HEK293 (cell line): ENCODE measurements at regions of chr20 and their contacts with region 1.

Region 1: DNA sequence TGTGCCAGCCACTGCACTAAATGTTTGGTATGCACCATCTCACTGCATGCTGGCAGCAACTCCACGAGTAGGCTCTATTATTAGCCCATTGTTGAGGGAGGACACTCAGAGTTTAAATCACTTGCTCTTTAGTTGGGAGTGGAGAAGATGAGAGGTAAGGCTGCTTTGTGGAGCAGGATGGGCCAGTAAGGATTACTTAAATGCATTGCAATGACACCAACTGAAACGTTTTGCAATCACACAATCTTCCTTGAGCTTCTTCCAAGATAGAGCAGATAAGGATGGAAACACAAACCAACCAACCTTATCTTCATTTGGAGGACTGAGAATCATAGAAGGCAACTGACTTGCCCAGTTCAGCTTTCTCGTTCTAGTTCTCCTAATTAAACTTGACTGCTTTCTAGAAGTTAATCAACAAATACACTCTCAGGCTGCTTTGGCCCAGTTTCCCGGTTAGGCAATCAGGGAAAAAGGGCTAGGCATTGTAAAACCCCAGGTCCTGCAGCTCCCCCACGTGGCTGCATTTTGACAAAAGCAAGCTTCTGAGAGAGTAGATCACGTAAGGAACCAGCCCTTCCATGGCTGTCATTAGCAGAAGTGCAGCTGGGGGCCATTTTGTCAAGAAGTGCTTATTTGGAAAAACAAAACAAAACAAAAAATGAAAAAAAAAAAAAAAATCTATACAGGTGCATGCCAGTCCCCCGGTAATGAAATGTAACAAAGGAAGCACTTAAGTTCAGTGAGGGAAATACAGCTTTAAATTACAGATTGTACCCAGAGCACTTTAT is 130.6 kb downstream of the BCAS1 start:
- H3K4me3 ChIP-seq: no peak overlapping the region
- H3K27ac ChIP-seq: no peak overlapping the region
- H3K4me1 ChIP-seq: no peaks in the 10 kb centered on the region
- CTCF ChIP-seq: peak; percentile 80

Region 2: GRCh38 chr20:53578492-53579222 is 361.1 kb before region 1 on chr20:
- CTCF ChIA-PET with region 1: interaction called, 39 read pairs
- POLR2A ChIA-PET with region 1: no interaction called
- H3K4me3 ChIP-seq: no peak overlapping the region
- H3K27ac ChIP-seq: no peak overlapping the region
- H3K4me1 ChIP-seq: peaks cover 7% of the 10 kb centered on the region; the same call in 1 of the 2 replicates
- CTCF ChIP-seq: peak; percentile 80

Region 3: DNA sequence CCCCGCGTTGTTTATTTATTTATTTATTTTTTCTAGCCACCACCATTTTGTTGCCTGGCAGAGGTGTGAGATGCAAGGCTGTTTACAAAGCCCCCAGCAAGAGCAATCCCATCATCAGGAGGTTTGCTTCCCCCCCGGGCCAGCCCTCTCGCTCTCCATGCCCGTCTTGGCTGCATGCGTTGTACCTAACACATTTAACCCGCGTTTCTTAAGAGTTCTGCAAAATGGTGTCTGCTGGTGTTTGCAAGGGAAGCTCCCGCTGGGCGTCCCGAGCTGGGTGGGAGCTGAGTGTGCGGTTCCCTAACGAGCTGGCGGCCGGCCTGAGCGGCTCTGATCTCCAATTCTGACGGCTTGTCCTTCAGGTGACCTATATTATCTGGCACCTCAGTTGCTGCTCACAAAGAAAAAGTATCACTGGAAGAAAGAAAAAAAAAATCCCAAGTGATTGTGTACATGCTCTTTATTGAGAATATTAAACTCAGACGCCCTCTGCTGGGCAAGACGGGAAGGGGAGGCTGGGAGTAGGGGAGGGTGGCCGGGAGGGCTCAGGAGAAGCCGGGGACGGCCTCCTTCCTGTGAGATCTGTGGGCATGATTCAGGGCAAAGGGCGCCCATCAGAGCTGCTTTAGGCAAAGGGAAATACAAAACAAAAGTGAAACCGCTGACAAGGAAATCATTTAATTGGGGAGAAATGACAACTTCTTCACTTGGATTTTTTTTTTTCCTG is 24.2 kb before region 1 on chr20:
- CTCF ChIA-PET with region 1: interaction called, 21 read pairs
- POLR2A ChIA-PET with region 1: no interaction called
- H3K4me3 ChIP-seq: peak overlapping the region; percentile 58
- H3K27ac ChIP-seq: peak overlapping the region; percentile 78; the same call in 1 of the 2 replicates
- H3K4me1 ChIP-seq: 0 out of 2 replicates have a peak, but pooled peaks cover 5% of the 10 kb centered on the region
- CTCF ChIP-seq: peak; percentile 84

Region 4: GRCh38 chr20:53926428-53927028 is 13.2 kb before region 1 on chr20:
- CTCF ChIA-PET with region 1: interaction called, 16 read pairs
- POLR2A ChIA-PET with region 1: no interaction called
- H3K4me3 ChIP-seq: no peak overlapping the region
- H3K27ac ChIP-seq: no peak overlapping the region
- H3K4me1 ChIP-seq: no peaks in the 10 kb centered on the region; the same call in 1 of the 2 replicates
- CTCF ChIP-seq: no peak

Region 5: GRCh38 chr20:54062812-54063280 is 123.1 kb after region 1 on chr20:
- CTCF ChIA-PET with region 1: interaction called, 20 read pairs
- POLR2A ChIA-PET with region 1: no interaction called
- H3K4me3 ChIP-seq: no peak overlapping the region
- H3K27ac ChIP-seq: no peak overlapping the region
- H3K4me1 ChIP-seq: no peaks in the 10 kb centered on the region
- CTCF ChIP-seq: no peak; the same call in 1 of the 2 replicates

Region 6: GRCh38 chr20:54152254-54153040 is 212.7 kb after region 1 on chr20:
- CTCF ChIA-PET with region 1: no interaction called
- POLR2A ChIA-PET with region 1: no interaction called
- H3K4me3 ChIP-seq: no peak overlapping the region
- H3K27ac ChIP-seq: no peak overlapping the region
- H3K4me1 ChIP-seq: peaks cover 6% of the 10 kb centered on the region; the same call in 1 of the 2 replicates
- CTCF ChIP-seq: no peak